ENCODE measurements at regions of chr19 and their contacts with region 1.

Region 1: GRCh38 chr19:12145348-12145747 is 5.2 kb upstream of the ZNF20 start:
- DNase-seq: no peak
- H3K4me3 ChIP-seq: no peak overlapping the region
- H3K27ac ChIP-seq: no peak overlapping the region
- H3K4me1 ChIP-seq: peaks cover 0 to 7% (median 6%) of the 10 kb centered on the region in 4 experiments; a peak in 5 of 7 replicates
- H3K27me3 ChIP-seq: no peaks in the 10 kb centered on the region
- CTCF ChIP-seq: no peak
- EP300 ChIP-seq: no peak
- POLR2A ChIP-seq: no peak
- RAD21 ChIP-seq: no peak

Region 2: DNA sequence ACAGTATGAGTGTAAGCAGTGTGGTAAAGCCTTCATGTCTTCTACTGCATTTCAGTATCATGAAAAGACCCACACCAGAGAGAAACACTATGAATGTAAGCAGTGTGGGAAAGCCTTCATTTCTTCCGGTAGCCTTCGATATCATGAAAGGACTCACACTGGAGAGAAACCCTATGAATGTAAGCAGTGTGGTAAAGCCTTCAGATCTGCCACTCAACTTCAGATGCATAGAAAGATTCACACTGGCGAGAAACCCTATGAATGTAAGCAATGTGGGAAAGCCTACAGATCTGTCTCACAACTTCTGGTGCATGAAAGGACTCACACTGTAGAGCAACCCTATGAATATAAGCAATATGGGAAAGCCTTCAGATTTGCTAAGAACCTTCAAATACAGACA is 68.0 kb before region 1 on chr19:
- CTCF ChIA-PET with region 1: no interaction called
- POLR2A ChIA-PET with region 1: no interaction called
- DNase-seq: no peak
- H3K4me3 ChIP-seq: no peak overlapping the region; a peak in 1 of 8 replicates
- H3K27ac ChIP-seq: no peak overlapping the region
- H3K4me1 ChIP-seq: no peaks in the 10 kb centered on the region
- H3K27me3 ChIP-seq: no peaks in the 10 kb centered on the region
- CTCF ChIP-seq: no peak
- EP300 ChIP-seq: no peak
- POLR2A ChIP-seq: no peak
- RAD21 ChIP-seq: no peak

Region 3: GRCh38 chr19:12156223-12157058 is 11.1 kb after region 1 on chr19 and contains the start of gene ZNF625:
- CTCF ChIA-PET with region 1: interaction called, 10 read pairs
- POLR2A ChIA-PET with region 1: interaction called, 26 read pairs
- DNase-seq: peak; percentile 85 to 95
- H3K4me3 ChIP-seq: peak within 1 kb of the TSS; percentile 77 to 93 (median 82)
- H3K27ac ChIP-seq: peak within 1 kb of the TSS; percentile 93
- H3K4me1 ChIP-seq: peaks cover 0 to 3% (median 2%) of the 10 kb centered on the region in 4 experiments; a peak in 3 of 7 replicates
- H3K27me3 ChIP-seq: no peaks in the 10 kb centered on the region
- CTCF ChIP-seq: no peak
- EP300 ChIP-seq: no peak
- POLR2A ChIP-seq: peak; percentile 93 to 98
- RAD21 ChIP-seq: no peak
- total RNA-seq, gene ZNF625: 23.3 and 26.8 TPM in 2 replicates

Region 4: DNA sequence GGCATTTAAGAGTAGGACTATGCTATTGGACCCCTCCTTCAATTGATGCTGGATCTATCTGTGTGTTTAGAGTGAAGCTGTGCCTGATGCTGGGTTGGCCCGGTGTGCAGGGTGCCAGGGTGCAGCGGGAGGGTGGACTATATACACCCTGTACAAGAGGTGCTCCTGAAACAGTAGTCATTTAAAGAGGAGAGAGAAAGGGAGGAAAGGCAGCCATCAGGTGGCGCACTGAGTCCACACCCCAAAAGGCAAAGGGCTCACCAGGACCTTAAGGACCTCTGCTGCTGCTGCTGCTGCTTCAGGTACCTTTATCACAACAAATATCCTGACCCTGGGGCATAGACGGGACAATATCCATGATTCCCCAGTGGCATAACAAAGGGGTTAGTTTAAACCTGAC is 56.9 kb after region 1 on chr19:
- CTCF ChIA-PET with region 1: no interaction called
- POLR2A ChIA-PET with region 1: no interaction called
- DNase-seq: peak; percentile 27 to 51
- H3K4me3 ChIP-seq: no peak overlapping the region
- H3K27ac ChIP-seq: no peak overlapping the region
- H3K4me1 ChIP-seq: no peaks in the 10 kb centered on the region
- H3K27me3 ChIP-seq: no peaks in the 10 kb centered on the region
- CTCF ChIP-seq: peak; percentile 63 to 72 (median 72)
- EP300 ChIP-seq: no peak
- POLR2A ChIP-seq: no peak
- RAD21 ChIP-seq: peak; percentile 77 to 83